Activated CD4-positive, alpha-beta memory T cell treated with anti-CD3 and anti-CD28 coated beads for 36 hours (primary cell): ENCODE measurements at regions of chr5 and their contacts with region 1.

Region 1: DNA sequence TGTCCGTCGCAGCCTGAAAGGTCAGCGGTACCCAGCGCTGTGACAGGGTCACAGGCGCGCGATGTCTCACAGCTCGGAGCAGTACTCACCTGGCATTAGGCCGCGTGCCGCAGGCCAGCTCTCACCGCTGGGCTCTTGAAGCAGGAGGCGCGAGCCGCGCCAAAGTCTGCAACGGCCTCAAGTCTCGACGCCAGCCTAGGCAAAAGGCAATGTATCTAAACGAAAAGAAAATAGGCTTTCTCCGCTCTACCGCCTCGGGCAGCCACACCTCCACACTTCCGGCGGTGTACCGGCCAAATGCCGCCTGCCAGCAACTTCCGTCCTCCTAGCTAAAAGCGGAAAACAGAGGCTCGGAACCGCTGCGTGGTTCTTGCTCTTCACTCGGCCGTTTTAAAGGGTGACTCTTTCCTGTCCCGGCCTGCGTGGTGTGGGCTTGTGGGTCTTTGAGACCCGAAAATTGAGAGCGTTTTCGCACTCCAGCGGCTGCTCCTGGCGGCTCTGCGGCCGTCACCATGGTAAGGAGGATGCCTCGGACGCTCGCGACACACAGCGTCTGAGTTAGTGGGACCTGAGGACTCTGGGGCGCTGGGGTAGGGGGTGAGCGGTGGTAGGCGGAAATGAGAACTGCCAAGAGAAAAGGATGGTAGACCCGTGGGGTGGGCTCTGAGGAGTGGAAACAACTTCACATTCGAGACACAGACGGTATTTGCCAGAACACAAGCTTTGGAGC is at the starts of genes GFM2 and NSA2:
- DNase-seq: peak; percentile 96
- H3K4me3 Mint-ChIP-seq: peak within 1 kb of the TSS; percentile 100
- H3K27ac Mint-ChIP-seq: peak within 1 kb of the TSS; percentile 97
- H3K4me1 Mint-ChIP-seq: peaks cover 36% of the 10 kb centered on the region
- H3K27me3 Mint-ChIP-seq: no peaks in the 10 kb centered on the region
- total RNA-seq, gene GFM2: 30.9 to 33.0 TPM
- total RNA-seq, gene NSA2: 96.1 to 98.0 TPM

Region 2: GRCh38 chr5:73565139-73565968 is 1201.7 kb before region 1 on chr5 and contains the starts of genes ANKRA2 and UTP15:
- CTCF ChIA-PET with region 1: no interaction called
- POLR2A ChIA-PET with region 1: no interaction called
- intact Hi-C with region 1: loop called (anchors 5 kb)
- DNase-seq: peak; percentile 99
- H3K4me3 Mint-ChIP-seq: peak within 1 kb of the TSS; percentile 92
- H3K27ac Mint-ChIP-seq: peak within 1 kb of the TSS; percentile 92
- H3K4me1 Mint-ChIP-seq: peaks cover 33% of the 10 kb centered on the region
- H3K27me3 Mint-ChIP-seq: no peaks in the 10 kb centered on the region
- total RNA-seq, gene ANKRA2: 19.1 to 21.0 TPM
- total RNA-seq, gene UTP15: 29.7 to 33.1 TPM

Region 3: DNA sequence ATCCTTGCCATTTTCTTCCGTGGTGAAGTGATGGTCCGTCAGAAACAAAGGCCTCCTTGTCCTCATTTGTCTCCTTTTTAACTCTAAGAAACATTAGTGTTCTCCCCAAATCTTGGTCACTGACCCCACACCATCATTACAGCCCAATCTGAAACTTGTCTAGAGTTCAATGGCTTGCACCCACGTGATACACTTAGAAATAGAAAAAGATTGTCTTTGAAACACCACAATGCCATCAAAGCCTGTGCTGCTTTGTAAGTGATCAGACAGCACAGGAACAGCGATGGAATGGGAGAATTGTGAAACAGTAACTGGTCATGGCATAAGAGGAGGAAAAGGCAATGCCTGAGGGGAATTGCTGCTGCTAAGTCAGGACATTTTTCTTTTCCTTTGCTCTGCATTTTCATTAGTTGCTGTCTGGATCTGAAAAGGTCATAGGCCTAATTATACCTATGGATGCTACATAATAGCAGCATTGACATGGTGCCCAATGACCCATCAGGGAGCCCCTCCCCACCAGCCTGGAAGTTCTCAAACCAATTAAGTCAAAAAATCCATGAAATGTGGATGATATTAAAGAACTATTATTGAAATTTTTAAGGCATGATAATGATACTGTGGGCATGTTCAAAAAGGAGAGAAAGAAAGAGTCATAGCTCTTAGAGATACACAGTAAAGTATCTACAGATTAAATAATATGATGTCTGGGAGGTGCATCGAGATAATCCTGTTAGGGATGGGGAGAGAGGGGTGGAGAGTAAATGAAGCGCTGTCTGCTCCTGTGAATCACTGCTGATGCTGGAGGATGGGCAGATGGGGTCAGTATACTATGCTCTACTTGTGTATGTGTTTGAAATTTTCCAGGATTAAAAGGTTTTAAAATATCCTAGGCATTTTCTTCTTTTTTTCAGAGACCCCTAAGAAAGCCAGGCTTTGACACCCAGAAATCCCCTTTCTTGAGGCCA is 210.1 kb before region 1 on chr5:
- CTCF ChIA-PET with region 1: no interaction called
- POLR2A ChIA-PET with region 1: no interaction called
- intact Hi-C with region 1: no loop called
- DNase-seq: no peak
- H3K4me3 Mint-ChIP-seq: no peak overlapping the region
- H3K27ac Mint-ChIP-seq: no peak overlapping the region
- H3K4me1 Mint-ChIP-seq: no peaks in the 10 kb centered on the region
- H3K27me3 Mint-ChIP-seq: peaks cover 5% of the 10 kb centered on the region

Region 4: GRCh38 chr5:74684900-74685851 is 81.8 kb before region 1 on chr5 and contains the start of gene HEXB:
- CTCF ChIA-PET with region 1: interaction called, 4 read pairs
- POLR2A ChIA-PET with region 1: no interaction called
- intact Hi-C with region 1: loop called (anchors 2 kb)
- DNase-seq: peak; percentile 92
- H3K4me3 Mint-ChIP-seq: peak within 1 kb of the TSS; percentile 79
- H3K27ac Mint-ChIP-seq: peak within 1 kb of the TSS; percentile 49
- H3K4me1 Mint-ChIP-seq: peaks cover 21% of the 10 kb centered on the region
- H3K27me3 Mint-ChIP-seq: no peaks in the 10 kb centered on the region
- total RNA-seq, gene HEXB: 67.1 to 68.5 TPM

Region 5: DNA sequence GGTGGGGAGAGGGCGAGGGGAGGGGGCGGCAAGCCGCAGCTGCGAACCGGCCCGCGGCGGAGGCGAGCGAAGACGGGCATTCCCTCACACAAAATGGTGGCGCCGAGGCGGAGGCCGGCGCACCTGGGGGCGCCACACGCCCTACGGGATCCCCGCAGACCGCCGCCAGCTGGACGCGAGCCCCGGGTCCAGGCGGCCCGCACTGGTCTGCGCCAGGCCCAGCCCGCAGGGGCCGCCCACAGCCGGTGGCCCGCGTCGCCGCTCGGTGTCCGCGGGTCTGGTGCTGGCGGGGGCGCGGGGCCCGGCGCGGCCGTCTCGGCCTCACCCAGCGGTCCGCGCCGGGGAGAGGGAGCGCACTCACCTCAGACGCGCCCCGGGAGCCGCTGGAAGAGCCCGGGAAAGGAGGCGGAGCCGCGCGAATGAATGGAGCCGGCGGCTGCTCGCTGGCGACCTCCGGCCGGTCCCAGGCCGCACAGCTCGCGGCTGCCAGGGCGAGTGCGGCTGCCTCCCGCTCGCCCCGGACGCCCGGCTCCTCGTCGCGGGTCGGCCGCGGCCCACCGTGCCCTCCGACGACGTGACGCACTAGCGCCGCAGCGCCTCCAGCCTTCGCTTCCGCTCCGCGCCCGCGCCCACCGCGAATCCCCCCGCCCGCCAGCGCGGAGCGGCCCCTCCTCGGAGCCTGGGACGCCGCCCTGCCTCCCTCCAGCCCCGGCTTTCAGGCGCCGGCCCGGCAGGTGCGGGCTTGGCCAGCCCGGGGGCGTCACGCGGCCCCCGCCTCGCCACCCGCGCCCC is 99.0 kb after region 1 on chr5 and contains the start of gene FAM169A:
- CTCF ChIA-PET with region 1: no interaction called
- POLR2A ChIA-PET with region 1: interaction called, 3 read pairs
- intact Hi-C with region 1: loop called (anchors 5 kb)
- DNase-seq: peak; percentile 56
- H3K4me3 Mint-ChIP-seq: peak within 1 kb of the TSS; percentile 84
- H3K27ac Mint-ChIP-seq: peak within 1 kb of the TSS; percentile 76
- H3K4me1 Mint-ChIP-seq: peaks cover 23% of the 10 kb centered on the region
- H3K27me3 Mint-ChIP-seq: peaks cover 3% of the 10 kb centered on the region
- total RNA-seq, gene FAM169A: 9.0 to 10.4 TPM

Region 6: GRCh38 chr5:75265731-75266130 is 498.7 kb after region 1 on chr5:
- CTCF ChIA-PET with region 1: no interaction called
- POLR2A ChIA-PET with region 1: no interaction called
- intact Hi-C with region 1: loop called (anchors 10 kb)
- DNase-seq: no peak
- H3K4me3 Mint-ChIP-seq: no peak overlapping the region
- H3K27ac Mint-ChIP-seq: no peak overlapping the region
- H3K4me1 Mint-ChIP-seq: no peaks in the 10 kb centered on the region
- H3K27me3 Mint-ChIP-seq: peaks cover 5% of the 10 kb centered on the region

Region 7: GRCh38 chr5:75336625-75337339 is 569.8 kb after region 1 on chr5 and contains the start of gene HMGCR:
- CTCF ChIA-PET with region 1: no interaction called
- POLR2A ChIA-PET with region 1: no interaction called
- intact Hi-C with region 1: loop called (anchors 1 kb)
- DNase-seq: peak; percentile 99
- H3K4me3 Mint-ChIP-seq: no peak within 1 kb of the TSS
- H3K27ac Mint-ChIP-seq: no peak within 1 kb of the TSS
- H3K4me1 Mint-ChIP-seq: peaks cover 35% of the 10 kb centered on the region
- H3K27me3 Mint-ChIP-seq: no peaks in the 10 kb centered on the region
- total RNA-seq, gene HMGCR: 57.7 to 68.6 TPM

Region 8: GRCh38 chr5:75717082-75717922 is 950.3 kb after region 1 on chr5 and contains the start of gene POC5:
- CTCF ChIA-PET with region 1: no interaction called
- POLR2A ChIA-PET with region 1: no interaction called
- intact Hi-C with region 1: loop called (anchors 10 kb)
- DNase-seq: peak; percentile 99
- H3K4me3 Mint-ChIP-seq: peak within 1 kb of the TSS; percentile 98
- H3K27ac Mint-ChIP-seq: peak within 1 kb of the TSS; percentile 99
- H3K4me1 Mint-ChIP-seq: peaks cover 28% of the 10 kb centered on the region
- H3K27me3 Mint-ChIP-seq: no peaks in the 10 kb centered on the region
- total RNA-seq, gene POC5: 20.7 to 21.8 TPM